ENCODE measurements at regions of chr7 and their contacts with region 1.

Region 1: GRCh38 chr7:106895246-106895864 is 30.3 kb downstream of the PIK3CG start:
- DNase-seq: peak; percentile 93
- H3K4me3 ChIP-seq: peak overlapping the region; percentile 12
- H3K27ac ChIP-seq: peak overlapping the region; percentile 74
- H3K4me1 ChIP-seq: peaks cover 43% of the 10 kb centered on the region
- CTCF ChIP-seq: peak; percentile 20; the same call in 1 of the 2 replicates

Region 2: GRCh38 chr7:106883456-106884026 is 11.8 kb before region 1 on chr7:
- CTCF ChIA-PET with region 1: no interaction called
- POLR2A ChIA-PET with region 1: interaction called, 10 read pairs
- intact Hi-C with region 1: no loop called
- DNase-seq: peak; percentile 66
- H3K4me3 ChIP-seq: peak overlapping the region; percentile 27
- H3K27ac ChIP-seq: peak overlapping the region; percentile 52
- H3K4me1 ChIP-seq: peaks cover 52% of the 10 kb centered on the region
- CTCF ChIP-seq: no peak

Measured in OCI-LY7 (cell line).